ENCODE measurements at regions of chr21 and their contacts with region 1.

Region 1: GRCh38 chr21:29849735-29850176 is 90.0 kb downstream of the GRIK1 start:
- DNase-seq: peak; percentile 41
- H3K4me3 ChIP-seq: no peak overlapping the region
- H3K27ac ChIP-seq: no peak overlapping the region
- H3K4me1 ChIP-seq: no peaks in the 10 kb centered on the region
- H3K27me3 ChIP-seq: no peaks in the 10 kb centered on the region
- CTCF ChIP-seq: peak; percentile 53

Region 2: GRCh38 chr21:29080454-29080941 is 769.3 kb before region 1 on chr21:
- intact Hi-C with region 1: loop called (anchors 10 kb)
- DNase-seq: no peak
- H3K4me3 ChIP-seq: no peak overlapping the region
- H3K27ac ChIP-seq: no peak overlapping the region
- H3K4me1 ChIP-seq: no peaks in the 10 kb centered on the region
- H3K27me3 ChIP-seq: no peaks in the 10 kb centered on the region
- CTCF ChIP-seq: no peak

Region 3: GRCh38 chr21:29477941-29478340 is 371.8 kb before region 1 on chr21:
- intact Hi-C with region 1: loop called (anchors 2 kb)
- DNase-seq: no peak
- H3K4me3 ChIP-seq: no peak overlapping the region
- H3K27ac ChIP-seq: no peak overlapping the region
- H3K4me1 ChIP-seq: no peaks in the 10 kb centered on the region
- H3K27me3 ChIP-seq: no peaks in the 10 kb centered on the region
- CTCF ChIP-seq: no peak

Region 4: DNA sequence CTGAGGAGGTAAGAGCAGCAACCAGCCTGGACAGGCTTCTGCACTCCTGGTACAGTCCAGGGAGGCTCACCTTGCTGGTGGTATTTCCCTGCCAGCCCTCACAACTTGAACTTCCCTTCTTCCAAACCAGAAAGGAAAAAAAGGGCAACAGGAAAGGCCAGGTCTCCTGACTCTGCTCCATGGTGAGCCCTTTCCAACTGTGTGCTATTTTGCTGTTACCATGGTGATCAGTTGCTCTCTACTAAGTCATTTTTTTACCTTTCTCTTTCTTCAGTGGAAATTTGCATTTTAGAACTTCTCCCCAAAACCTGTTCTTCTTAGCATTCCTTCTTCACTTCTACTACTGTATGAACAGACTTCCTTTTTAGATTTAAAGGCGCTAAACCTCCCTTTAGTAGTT is 74.3 kb before region 1 on chr21:
- intact Hi-C with region 1: no loop called
- DNase-seq: no peak
- H3K4me3 ChIP-seq: no peak overlapping the region
- H3K27ac ChIP-seq: no peak overlapping the region
- H3K4me1 ChIP-seq: no peaks in the 10 kb centered on the region
- H3K27me3 ChIP-seq: no peaks in the 10 kb centered on the region
- CTCF ChIP-seq: no peak

Region 5: GRCh38 chr21:29975776-29976175 is 126.0 kb after region 1 on chr21:
- intact Hi-C with region 1: no loop called
- DNase-seq: no peak
- H3K4me3 ChIP-seq: no peak overlapping the region
- H3K27ac ChIP-seq: no peak overlapping the region
- H3K4me1 ChIP-seq: no peaks in the 10 kb centered on the region
- H3K27me3 ChIP-seq: no peaks in the 10 kb centered on the region
- CTCF ChIP-seq: no peak

Region 6: GRCh38 chr21:30044445-30045064 is 194.8 kb after region 1 on chr21:
- intact Hi-C with region 1: no loop called
- DNase-seq: peak; percentile 18
- H3K4me3 ChIP-seq: no peak overlapping the region
- H3K27ac ChIP-seq: no peak overlapping the region
- H3K4me1 ChIP-seq: no peaks in the 10 kb centered on the region
- H3K27me3 ChIP-seq: no peaks in the 10 kb centered on the region
- CTCF ChIP-seq: peak; percentile 82

Measured in colonic mucosa (tissue), 4 donors.